CD4-positive, alpha-beta memory T cell (primary cell): ENCODE measurements at regions of chr11 and their contacts with region 1.

Region 1: GRCh38 chr11:126310228-126310991 is 6.5 kb downstream of the DCPS start:
- DNase-seq: peak; percentile 31 to 47 (median 39)
- H3K4me3 ChIP-seq: no peak overlapping the region
- H3K4me3 Mint-ChIP-seq: no peak overlapping the region
- H3K27ac ChIP-seq: no peak overlapping the region
- H3K27ac Mint-ChIP-seq: peak overlapping the region in 2 of 7 donors; percentile 58 to 65
- H3K4me1 ChIP-seq: peaks cover 15% of the 10 kb centered on the region
- H3K4me1 Mint-ChIP-seq: peaks cover 25 to 47% (median 33%) of the 10 kb centered on the region in 4 donors
- H3K27me3 ChIP-seq: no peaks in the 10 kb centered on the region
- H3K27me3 Mint-ChIP-seq: no peaks in the 10 kb centered on the region

Region 2: DNA sequence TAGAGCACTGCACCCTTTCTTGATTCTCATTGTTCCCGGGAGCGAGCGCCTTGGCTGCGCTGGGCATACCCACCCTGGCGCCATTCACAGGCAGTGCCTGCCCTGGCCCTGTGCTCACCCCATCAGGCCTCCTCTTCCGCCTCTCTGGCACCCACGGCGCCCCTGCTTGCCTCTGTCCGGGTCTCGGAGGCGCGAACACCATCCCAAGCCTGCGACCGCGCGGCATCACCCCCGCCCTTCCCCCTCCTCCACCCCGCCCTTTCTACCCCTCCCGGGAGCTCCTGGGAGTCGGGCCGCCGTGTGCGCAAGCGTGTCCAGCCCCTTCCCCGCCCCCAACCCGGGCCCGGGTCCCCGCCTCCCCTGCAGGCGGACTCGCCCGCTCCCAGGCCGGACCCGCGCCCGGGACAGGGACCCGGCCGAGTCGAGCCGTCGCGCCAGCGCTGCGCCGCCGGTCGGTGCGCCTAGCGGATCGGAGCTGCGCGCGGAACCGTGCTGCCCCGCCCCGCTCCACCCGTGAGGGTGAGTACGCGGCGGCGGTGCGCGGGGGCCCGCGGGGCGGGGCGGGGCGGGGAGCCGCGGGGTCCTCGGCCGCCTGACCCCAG is 45.0 kb after region 1 on chr11 and contains the start of gene ST3GAL4:
- CTCF ChIA-PET with region 1: no interaction called
- POLR2A ChIA-PET with region 1: no interaction called
- intact Hi-C with region 1: loop called (anchors 5 kb)
- DNase-seq: peak; percentile 38 to 60 (median 51)
- H3K4me3 ChIP-seq: peak within 1 kb of the TSS; percentile 57 to 60
- H3K4me3 Mint-ChIP-seq: peak within 1 kb of the TSS; percentile 82 to 92 (median 88)
- H3K27ac ChIP-seq: peak within 1 kb of the TSS; percentile 60
- H3K27ac Mint-ChIP-seq: peak within 1 kb of the TSS; percentile 10 to 86 (median 39)
- H3K4me1 ChIP-seq: peaks cover 20% of the 10 kb centered on the region
- H3K4me1 Mint-ChIP-seq: peaks cover 12 to 38% (median 18%) of the 10 kb centered on the region in 4 donors
- H3K27me3 ChIP-seq: no peaks in the 10 kb centered on the region
- H3K27me3 Mint-ChIP-seq: no peaks in the 10 kb centered on the region
- total RNA-seq, gene ST3GAL4: 2.6 TPM